Prostate gland (tissue), 2 donors: ENCODE measurements at regions of chr12 and their contacts with region 1.

Region 1: DNA sequence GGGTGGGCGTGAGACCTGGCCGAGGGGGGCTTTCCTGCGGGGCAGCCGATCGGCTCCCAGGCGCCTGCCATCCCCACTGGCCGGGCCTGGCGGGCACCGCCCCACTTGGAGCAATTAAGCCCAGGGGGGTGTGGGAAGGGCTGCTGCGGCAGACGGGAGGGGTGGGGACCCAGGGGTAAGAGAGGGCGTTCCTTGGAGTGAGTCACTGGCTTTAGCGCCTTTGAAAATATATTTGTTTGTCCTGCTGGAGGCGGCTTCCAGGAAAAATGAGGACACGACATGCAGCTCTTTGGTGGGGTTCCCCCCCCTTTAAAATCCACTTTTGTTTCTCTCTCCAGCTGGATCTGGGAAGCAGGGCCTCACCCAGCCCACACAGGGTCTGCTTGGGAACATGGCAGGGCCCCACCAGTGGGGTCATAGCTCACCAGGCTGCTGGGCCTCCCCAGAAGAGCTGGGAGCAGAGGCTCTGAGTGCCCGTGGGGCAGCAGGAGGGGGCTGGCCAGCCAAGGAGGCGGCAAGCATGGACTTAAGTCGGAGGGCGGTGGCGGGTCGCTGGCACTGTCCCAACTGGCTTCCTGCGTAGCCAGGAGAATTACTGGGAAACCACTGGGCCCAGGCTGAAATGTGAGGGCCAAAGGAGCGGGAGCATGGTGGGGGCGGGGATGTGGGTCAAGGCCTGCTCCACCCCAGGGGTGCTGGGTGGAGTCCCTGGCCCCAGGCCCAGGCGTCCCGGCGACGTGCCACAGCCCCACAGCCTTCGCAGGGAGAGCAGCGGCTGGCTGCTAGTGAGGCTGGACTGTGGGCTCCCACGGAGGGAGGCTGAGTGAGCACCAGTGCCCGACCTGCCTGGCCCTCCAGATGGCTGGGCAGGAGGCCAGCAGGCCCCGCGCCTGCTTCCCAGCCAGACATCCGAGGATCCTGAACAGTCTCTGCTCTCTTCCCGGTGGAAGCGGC is 128.0 kb downstream of the RFLNA start:
- DNase-seq: peak; percentile 89
- H3K4me3 ChIP-seq: peak overlapping the region in 1 of 2 donors; percentile 10
- H3K27ac ChIP-seq: peak overlapping the region; percentile 82 to 88
- H3K4me1 ChIP-seq: peaks cover 22% of the 10 kb centered on the region
- H3K27me3 ChIP-seq: no peaks in the 10 kb centered on the region
- CTCF ChIP-seq: peak in 1 of 4 experiments; percentile 15
- POLR2A ChIP-seq: peak; percentile 31

Region 2: GRCh38 chr12:124391340-124392261 is 31.2 kb before region 1 on chr12:
- intact Hi-C with region 1: loop called (anchors 2 kb)
- DNase-seq: no peak
- H3K4me3 ChIP-seq: no peak overlapping the region
- H3K27ac ChIP-seq: peak overlapping the region; percentile 93 to 95
- H3K4me1 ChIP-seq: peaks cover 30% of the 10 kb centered on the region
- H3K27me3 ChIP-seq: no peaks in the 10 kb centered on the region
- CTCF ChIP-seq: no peak
- POLR2A ChIP-seq: no peak

Region 3: DNA sequence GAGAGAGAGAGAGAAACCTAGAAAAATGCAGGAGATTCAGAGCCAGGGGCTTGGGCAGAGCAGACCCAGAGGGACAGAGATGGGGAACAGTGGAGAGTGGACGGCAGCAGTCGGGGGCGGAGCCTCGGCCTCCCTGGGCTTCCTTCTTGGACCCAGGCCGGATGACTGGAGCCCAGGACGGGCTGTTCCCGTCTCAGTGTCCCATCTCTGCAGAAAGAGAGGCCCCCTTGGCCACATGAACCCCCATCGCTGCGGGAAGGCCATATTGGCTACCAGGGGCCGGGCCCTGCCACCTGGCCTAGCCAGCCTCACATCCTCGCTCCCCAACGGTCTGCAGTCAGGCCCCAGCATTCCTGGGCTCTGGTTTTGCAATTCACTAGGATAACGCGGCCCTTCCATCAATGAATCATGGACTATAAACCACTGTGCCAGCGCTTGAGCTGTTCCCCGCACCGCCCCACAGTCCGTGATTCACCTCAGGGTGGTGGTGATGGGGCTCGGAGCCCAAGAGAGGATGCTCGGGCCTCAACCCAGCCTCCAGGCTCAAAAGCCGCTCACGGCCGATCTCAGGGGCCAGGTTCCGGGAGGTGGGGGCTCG is 11.5 kb before region 1 on chr12:
- intact Hi-C with region 1: loop called (anchors 1 kb)
- DNase-seq: no peak
- H3K4me3 ChIP-seq: no peak overlapping the region
- H3K27ac ChIP-seq: peak overlapping the region; percentile 65 to 71
- H3K4me1 ChIP-seq: peaks cover 19% of the 10 kb centered on the region
- H3K27me3 ChIP-seq: no peaks in the 10 kb centered on the region
- CTCF ChIP-seq: no peak
- POLR2A ChIP-seq: no peak

Region 4: GRCh38 chr12:124795081-124795948 is 372.5 kb after region 1 on chr12:
- intact Hi-C with region 1: no loop called
- DNase-seq: no peak
- H3K4me3 ChIP-seq: no peak overlapping the region
- H3K27ac ChIP-seq: no peak overlapping the region
- H3K4me1 ChIP-seq: no peaks in the 10 kb centered on the region
- H3K27me3 ChIP-seq: no peaks in the 10 kb centered on the region
- CTCF ChIP-seq: no peak
- POLR2A ChIP-seq: no peak